Activated CD4-positive, alpha-beta memory T cell treated with anti-CD3 and anti-CD28 coated beads, Interleukin-2, amount 10 ng/mL, durations not matched to agents 7 days and 5 days (primary cell): ENCODE measurements at regions of chr6 and their contacts with region 1.

Region 1: DNA sequence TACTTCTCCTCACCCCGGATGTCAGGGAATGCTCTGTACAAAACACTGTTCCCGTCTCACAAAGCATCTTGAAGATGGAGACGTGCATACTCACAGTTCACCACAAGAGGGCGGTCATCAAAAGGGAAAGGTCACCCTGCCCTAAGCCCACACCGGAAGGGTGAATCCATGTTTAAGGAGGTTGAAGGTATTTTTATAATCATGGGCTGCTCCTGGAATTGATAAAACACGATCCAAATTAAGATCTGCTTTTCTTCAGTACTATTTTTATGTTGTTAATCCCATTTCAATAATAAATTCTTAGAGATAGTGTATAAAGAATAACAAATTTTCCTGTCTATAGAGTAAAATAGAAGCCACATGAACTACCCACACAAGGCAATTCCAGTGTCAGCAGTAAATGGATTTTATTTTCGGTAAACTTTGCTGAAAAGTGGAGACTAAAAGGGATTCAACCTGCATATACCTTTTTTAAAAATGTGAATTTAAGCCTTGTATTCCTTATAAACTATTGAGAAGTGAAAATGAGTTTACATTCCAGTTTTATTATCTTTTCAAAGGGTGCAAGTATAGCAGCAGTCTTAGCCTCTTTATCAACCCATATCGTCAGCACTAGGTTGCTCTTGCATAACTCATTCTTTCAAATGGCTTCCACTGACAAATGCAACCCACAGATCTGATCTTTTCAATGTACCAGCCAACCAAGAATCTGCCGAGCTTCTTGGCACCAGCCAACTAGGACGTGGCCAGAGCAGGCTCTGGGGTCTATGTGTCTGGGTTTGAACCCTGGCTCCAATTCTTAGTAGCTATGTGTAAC is 79.7 kb upstream of the MBOAT1 start:
- DNase-seq: peak; percentile 78
- H3K4me3 Mint-ChIP-seq: no peak overlapping the region
- H3K27ac Mint-ChIP-seq: no peak overlapping the region
- H3K4me1 Mint-ChIP-seq: peaks cover 37% of the 10 kb centered on the region
- H3K27me3 Mint-ChIP-seq: peaks cover 2% of the 10 kb centered on the region

Region 2: DNA sequence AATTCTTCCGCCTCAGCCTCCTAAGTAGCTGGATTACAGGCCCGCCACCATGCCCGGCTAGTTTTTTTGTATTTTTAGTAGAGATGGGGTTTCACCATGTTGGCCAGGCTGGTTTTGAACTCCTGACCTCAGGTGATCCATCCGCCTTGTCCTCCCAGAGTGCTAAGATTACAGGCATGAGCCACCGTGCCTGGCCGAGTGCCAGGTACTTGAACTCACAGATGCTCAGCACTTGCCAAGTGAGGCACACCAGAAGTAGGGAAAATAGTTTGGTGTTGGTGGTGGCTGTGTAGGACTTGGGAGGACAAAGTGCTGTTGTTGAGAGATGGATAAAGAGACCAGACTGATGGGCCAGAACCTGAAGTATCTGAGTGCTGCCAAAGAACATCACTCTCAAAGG is 39.7 kb before region 1 on chr6:
- CTCF ChIA-PET with region 1: no interaction called
- POLR2A ChIA-PET with region 1: no interaction called
- DNase-seq: no peak
- H3K4me3 Mint-ChIP-seq: no peak overlapping the region
- H3K27ac Mint-ChIP-seq: no peak overlapping the region
- H3K4me1 Mint-ChIP-seq: no peaks in the 10 kb centered on the region
- H3K27me3 Mint-ChIP-seq: no peaks in the 10 kb centered on the region

Region 3: DNA sequence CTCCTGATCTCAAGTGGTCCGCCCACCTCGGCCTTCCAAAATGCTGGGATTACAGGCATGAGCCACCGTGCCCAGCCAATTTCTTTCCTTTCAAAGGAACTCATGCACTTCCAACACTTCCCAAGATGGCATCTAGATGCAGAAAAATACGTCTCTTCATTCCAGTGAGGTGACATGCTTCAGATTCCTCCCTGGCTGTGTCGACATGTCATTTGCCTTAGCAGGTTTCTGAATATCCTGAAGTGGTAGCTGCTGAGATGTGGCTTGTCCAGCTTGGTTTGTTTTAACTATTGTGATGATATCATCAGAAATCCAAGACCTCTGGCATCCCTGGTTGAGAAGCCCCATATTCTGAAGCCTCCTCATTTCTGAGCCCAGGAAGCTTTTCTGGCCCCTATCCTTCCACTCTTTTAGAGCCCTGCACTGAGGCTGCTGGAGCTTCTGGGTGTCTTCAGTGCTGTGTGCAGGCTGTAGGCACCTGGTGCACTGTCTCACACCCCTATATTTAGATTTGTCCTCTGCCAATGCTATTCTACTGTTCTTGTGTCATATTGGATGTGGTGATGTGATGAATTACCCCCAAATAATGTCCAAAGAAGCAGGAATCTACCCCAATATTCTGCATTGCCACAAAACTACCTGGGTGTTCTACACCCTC is 36.4 kb after region 1 on chr6:
- CTCF ChIA-PET with region 1: no interaction called
- POLR2A ChIA-PET with region 1: no interaction called
- DNase-seq: no peak
- H3K4me3 Mint-ChIP-seq: no peak overlapping the region
- H3K27ac Mint-ChIP-seq: no peak overlapping the region
- H3K4me1 Mint-ChIP-seq: no peaks in the 10 kb centered on the region
- H3K27me3 Mint-ChIP-seq: peaks cover 17% of the 10 kb centered on the region

Region 4: DNA sequence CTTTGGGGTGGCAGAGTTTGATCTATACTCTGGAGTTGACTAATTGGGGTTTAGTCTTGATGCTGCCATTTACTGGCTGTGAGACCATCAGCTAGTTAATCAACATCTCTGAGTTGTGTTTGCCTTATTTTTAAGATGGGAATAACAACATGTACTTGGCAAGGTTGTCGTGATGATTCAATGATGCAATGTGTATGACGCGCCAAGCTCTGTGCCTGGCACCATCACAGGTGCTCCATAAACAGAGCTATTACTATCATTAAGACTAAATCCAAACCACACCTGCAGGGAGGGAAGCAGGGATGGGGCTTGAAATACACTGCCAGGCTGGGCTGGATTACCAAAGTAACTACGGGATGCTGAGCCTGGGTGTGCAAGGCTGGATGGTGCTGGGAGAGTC is 49.6 kb after region 1 on chr6:
- CTCF ChIA-PET with region 1: no interaction called
- POLR2A ChIA-PET with region 1: no interaction called
- DNase-seq: no peak
- H3K4me3 Mint-ChIP-seq: no peak overlapping the region
- H3K27ac Mint-ChIP-seq: no peak overlapping the region
- H3K4me1 Mint-ChIP-seq: peaks cover 12% of the 10 kb centered on the region
- H3K27me3 Mint-ChIP-seq: no peaks in the 10 kb centered on the region

Region 5: DNA sequence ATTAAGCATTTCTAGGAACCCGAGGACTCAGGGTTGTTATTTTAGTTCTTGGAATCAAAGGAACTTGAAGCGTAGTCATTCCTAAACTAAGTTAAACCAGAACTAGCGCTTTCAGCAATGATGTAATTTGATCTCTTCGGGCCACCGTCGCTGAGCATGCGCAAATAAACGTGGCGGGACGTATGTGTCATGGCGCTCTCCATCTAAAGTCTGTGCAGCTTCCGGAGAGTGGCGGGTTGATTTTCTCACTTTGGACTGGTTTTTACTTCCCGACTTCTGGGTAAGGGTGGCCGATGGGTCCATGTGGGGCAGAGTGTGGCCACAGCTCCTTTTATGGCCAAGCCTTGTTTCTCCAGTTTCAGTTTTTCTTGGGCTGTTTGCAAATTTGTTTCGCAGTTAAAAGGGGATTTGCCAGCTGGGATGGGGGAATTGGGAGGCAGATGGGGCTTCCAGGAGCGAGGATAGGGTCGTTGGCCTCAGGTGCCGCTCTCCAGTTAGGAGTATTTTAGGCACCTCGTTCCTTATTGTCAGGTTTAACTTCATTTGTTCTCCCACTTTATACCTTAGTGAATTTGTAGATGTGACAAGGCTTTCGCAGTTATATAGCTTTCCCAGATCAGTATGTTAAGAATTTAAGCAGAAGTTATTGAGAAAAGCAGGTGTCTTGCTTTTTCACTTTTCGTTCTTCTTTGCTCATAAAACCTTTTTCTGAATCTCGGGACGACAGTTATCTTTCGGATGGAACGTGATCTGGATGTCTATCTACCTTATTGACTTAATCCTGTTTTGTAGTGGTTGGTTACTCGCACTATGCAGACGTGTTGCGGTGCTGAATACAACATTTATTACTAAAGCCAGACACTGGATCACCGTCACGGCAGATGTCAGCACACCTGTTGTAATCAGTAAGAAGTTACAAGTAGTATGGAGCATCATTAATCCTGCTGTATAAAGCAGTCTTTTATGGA is 242.6 kb after region 1 on chr6 and contains the start of gene CDKAL1:
- CTCF ChIA-PET with region 1: interaction called, 16 read pairs
- POLR2A ChIA-PET with region 1: interaction called, 3 read pairs
- DNase-seq: peak; percentile 95
- H3K4me3 Mint-ChIP-seq: peak within 1 kb of the TSS; percentile 97
- H3K27ac Mint-ChIP-seq: peak within 1 kb of the TSS; percentile 94
- H3K4me1 Mint-ChIP-seq: peaks cover 48% of the 10 kb centered on the region
- H3K27me3 Mint-ChIP-seq: peaks cover 1% of the 10 kb centered on the region
- total RNA-seq, gene CDKAL1: 21.2 to 23.0 TPM